Activated naive CD8-positive, alpha-beta T cell treated with anti-CD3 and anti-CD28 coated beads, Interleukin-2, amount 10 ng/mL, durations not matched to agents 7 days and 5 days (primary cell): ENCODE measurements at regions of chr17 and their contacts with region 1.

Region 1: DNA sequence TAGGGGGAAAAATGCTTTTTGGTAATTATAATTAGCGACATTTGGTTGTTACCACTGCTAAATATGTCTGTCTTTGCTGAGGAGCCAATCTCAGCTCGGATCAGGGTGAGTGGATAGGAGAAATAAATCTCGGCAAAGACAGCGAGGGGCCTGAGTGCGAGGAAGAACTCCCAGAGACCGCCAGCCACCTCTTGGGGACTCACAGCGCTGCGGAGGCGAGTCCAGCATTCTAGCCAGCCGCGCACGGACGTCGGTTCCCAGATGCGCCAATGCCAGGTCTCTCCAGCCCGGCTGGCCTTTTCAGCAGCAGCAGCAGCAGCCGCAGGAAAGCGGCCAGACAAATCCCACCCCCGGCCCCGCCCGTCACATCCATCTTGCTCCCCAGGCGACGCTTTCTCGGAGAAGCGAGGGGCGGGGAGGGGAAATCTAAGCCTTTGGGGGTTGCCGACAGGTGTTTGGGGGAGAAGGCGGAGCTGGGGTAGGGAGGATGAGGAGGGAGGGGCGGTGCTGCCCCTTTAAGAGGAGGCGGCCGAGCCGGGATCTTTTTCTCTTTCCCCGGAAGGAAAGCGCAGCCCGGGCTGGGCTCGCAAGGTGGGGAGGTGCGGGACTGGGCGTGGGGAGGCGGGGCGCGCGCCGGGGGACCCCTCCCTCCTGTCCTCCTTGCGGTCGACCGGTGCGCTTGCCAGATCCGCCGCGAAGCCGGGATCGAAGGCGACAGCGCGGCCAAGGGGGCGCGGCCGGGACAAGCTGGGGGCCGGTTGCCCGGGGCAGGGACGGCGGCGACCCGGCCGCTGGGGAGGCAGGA is at the start of gene ITGA3:
- DNase-seq: peak; percentile 73
- ATAC-seq: peak; percentile 49
- H3K4me3 Mint-ChIP-seq: peak within 1 kb of the TSS; percentile 91
- H3K27ac Mint-ChIP-seq: peak within 1 kb of the TSS; percentile 66
- H3K4me1 Mint-ChIP-seq: peaks cover 41% of the 10 kb centered on the region
- H3K27me3 Mint-ChIP-seq: no peaks in the 10 kb centered on the region
- total RNA-seq, gene ITGA3: 6.9 to 14.0 TPM

Region 2: DNA sequence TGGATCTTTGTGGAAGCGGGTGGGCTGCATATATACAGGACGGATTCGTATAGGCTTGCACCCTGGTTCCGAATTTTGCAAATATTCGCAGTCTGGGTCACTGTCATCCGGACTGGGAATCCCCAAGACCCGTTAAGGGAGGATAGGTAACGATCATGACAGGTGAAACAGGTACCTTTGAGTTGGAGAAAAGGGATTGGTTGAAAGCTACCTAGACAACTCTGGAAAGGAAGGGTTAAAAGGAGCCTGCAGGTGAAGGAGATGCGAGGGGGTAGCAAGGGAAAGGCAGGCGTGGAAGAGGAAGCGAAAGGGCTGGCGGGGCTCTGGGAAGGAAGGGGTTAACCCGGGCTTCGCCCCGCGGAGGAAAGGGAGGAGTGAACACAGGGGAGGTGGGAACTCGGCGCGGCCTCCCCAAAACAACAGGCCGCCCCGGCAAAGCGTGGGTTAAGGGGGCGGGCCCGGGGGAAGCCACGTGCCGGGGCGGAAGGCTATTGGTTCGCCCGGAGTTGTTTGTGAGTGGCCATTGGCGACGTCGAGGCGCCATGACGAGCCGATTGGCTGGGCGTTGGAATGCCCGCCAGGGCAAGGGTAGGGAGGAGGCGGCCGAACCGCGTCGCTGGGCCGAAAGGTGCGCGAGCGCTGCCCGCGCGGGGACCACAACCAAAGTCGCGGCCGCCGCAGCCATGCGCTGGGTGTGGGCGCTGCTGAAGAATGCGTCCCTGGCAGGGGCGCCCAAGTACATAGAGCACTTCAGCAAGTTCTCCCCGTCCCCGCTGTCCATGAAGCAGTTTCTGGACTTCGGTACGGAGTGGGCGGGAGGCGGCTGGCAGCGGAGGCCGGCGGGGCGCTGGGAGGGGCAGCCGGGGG is 39.4 kb after region 1 on chr17 and contains the start of gene PDK2:
- POLR2A ChIA-PET with region 1: interaction called, 14 read pairs
- DNase-seq: peak; percentile 97
- ATAC-seq: peak; percentile 97
- H3K4me3 Mint-ChIP-seq: peak within 1 kb of the TSS; percentile 90
- H3K27ac Mint-ChIP-seq: peak within 1 kb of the TSS; percentile 92
- H3K4me1 Mint-ChIP-seq: peaks cover 9% of the 10 kb centered on the region
- H3K27me3 Mint-ChIP-seq: peaks cover 2% of the 10 kb centered on the region
- total RNA-seq, gene PDK2: 24.1 to 26.4 TPM

Region 3: GRCh38 chr17:50123649-50124349 is 68.2 kb after region 1 on chr17:
- POLR2A ChIA-PET with region 1: no interaction called
- DNase-seq: no peak
- ATAC-seq: peak; percentile 20
- H3K4me3 Mint-ChIP-seq: no peak overlapping the region
- H3K27ac Mint-ChIP-seq: no peak overlapping the region
- H3K4me1 Mint-ChIP-seq: peaks cover 12% of the 10 kb centered on the region
- H3K27me3 Mint-ChIP-seq: peaks cover 45% of the 10 kb centered on the region